Calu3 (cell line): ENCODE measurements at regions of chr20 and their contacts with region 1.

Region 1: GRCh38 chr20:45779011-45779915 is 12.4 kb downstream of the WFDC3 start:
- DNase-seq: peak; percentile 95
- H3K4me3 Mint-ChIP-seq: peak overlapping the region; percentile 40
- H3K27ac Mint-ChIP-seq: peak overlapping the region; percentile 82
- H3K4me1 Mint-ChIP-seq: peaks cover 70% of the 10 kb centered on the region
- H3K27me3 Mint-ChIP-seq: peaks cover 4% of the 10 kb centered on the region
- CTCF ChIP-seq: no peak

Region 2: DNA sequence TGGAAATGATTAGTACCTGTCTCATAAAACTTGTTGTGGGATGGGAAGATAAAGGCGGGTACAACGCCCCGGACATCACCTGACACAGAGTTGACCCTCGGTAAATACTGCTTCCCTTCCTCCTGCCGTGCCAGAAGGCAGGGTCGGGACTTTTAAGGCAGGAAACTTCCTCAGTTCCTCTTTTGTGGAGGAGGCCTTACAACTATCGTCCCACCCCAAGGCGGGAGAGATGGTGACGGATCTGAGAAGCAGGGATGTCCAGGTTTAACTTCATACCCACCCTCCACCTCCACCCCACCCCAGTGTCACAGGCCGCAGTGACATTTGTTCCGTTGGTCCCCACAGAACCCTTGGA is 13.0 kb after region 1 on chr20:
- CTCF ChIA-PET with region 1: interaction called, 17 read pairs
- intact Hi-C with region 1: no loop called
- DNase-seq: no peak
- H3K4me3 Mint-ChIP-seq: peak overlapping the region; percentile 76
- H3K27ac Mint-ChIP-seq: peak overlapping the region; percentile 85
- H3K4me1 Mint-ChIP-seq: peaks cover 8% of the 10 kb centered on the region
- H3K27me3 Mint-ChIP-seq: peaks cover 14% of the 10 kb centered on the region
- CTCF ChIP-seq: no peak

Region 3: GRCh38 chr20:45798935-45799642 is 19.8 kb after region 1 on chr20:
- CTCF ChIA-PET with region 1: interaction called, 12 read pairs
- intact Hi-C with region 1: no loop called
- DNase-seq: peak; percentile 85
- H3K4me3 Mint-ChIP-seq: no peak overlapping the region
- H3K27ac Mint-ChIP-seq: no peak overlapping the region
- H3K4me1 Mint-ChIP-seq: peaks cover 13% of the 10 kb centered on the region
- H3K27me3 Mint-ChIP-seq: no peaks in the 10 kb centered on the region
- CTCF ChIP-seq: peak; percentile 94